ENCODE measurements at regions of chr10 and their contacts with region 1.

Region 1: DNA sequence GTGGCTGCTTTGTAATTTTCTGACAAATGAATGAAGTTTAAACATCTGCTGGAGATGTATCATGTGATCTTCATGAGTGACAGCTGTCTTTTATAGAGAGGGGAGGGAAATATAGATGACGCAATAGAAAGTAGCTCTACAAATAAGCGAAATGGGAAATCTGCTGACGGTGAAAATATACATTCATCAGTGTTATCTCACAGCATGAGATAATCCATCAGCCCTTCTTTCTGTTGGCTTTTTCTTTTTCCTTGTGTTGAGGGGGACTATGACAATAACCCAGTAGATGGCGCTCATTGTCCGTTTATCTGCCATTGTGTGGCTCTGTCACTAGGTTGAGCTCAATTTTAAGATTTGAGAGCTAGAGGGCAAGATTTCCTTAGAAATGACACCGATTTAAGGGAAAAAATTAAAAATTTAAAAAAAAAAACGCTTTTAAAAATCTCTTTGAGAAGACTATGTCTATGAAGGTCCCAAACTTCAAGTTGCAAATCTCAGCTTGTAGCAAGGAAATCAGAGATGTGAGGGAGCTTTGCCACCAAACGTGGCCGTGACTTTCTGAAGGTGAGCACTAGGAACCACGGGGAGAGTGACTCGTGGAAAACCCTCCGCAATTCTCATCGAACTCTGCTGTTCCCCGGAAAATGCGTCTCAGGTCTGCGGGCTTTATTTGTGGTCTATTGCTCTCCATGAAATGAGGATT is 114.6 kb upstream of the SFMBT2 start:
- DNase-seq: peak; percentile 78
- H3K4me3 Mint-ChIP-seq: no peak overlapping the region
- H3K27ac Mint-ChIP-seq: no peak overlapping the region
- H3K4me1 Mint-ChIP-seq: peaks cover 6% of the 10 kb centered on the region
- H3K27me3 Mint-ChIP-seq: peaks cover 26% of the 10 kb centered on the region
- CTCF ChIP-seq: peak; percentile 71

Region 2: DNA sequence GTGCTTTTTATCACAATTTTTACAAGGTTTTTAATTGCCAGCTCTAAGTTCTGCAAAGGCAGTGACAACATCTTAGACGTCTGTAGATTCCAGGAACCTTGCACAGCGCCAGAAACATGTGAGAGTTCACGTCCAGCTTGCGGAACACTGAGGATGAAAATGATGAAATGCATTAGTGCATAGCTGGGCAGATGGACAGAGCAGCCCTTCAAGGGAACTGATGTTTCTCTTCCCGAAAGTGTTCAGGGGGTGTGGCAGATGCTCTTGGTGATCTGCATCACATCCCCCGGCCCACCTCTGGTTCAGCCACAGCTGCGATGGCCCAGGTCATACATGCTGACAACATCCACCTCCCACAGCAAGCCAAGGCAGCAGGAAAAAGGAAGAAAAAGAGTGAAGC is 100.4 kb after region 1 on chr10:
- CTCF ChIA-PET with region 1: interaction called, 4 read pairs
- POLR2A ChIA-PET with region 1: no interaction called
- intact Hi-C with region 1: loop called (anchors 5 kb)
- DNase-seq: peak; percentile 17
- H3K4me3 Mint-ChIP-seq: no peak overlapping the region
- H3K27ac Mint-ChIP-seq: peak overlapping the region; percentile 32
- H3K4me1 Mint-ChIP-seq: peaks cover 18% of the 10 kb centered on the region
- H3K27me3 Mint-ChIP-seq: no peaks in the 10 kb centered on the region
- CTCF ChIP-seq: no peak

Region 3: GRCh38 chr10:7756360-7756992 is 231.0 kb after region 1 on chr10:
- CTCF ChIA-PET with region 1: interaction called, 4 read pairs
- POLR2A ChIA-PET with region 1: no interaction called
- intact Hi-C with region 1: loop called (anchors 2 kb)
- DNase-seq: peak; percentile 55
- H3K4me3 Mint-ChIP-seq: no peak overlapping the region
- H3K27ac Mint-ChIP-seq: no peak overlapping the region
- H3K4me1 Mint-ChIP-seq: no peaks in the 10 kb centered on the region
- H3K27me3 Mint-ChIP-seq: no peaks in the 10 kb centered on the region
- CTCF ChIP-seq: peak; percentile 45

Region 4: DNA sequence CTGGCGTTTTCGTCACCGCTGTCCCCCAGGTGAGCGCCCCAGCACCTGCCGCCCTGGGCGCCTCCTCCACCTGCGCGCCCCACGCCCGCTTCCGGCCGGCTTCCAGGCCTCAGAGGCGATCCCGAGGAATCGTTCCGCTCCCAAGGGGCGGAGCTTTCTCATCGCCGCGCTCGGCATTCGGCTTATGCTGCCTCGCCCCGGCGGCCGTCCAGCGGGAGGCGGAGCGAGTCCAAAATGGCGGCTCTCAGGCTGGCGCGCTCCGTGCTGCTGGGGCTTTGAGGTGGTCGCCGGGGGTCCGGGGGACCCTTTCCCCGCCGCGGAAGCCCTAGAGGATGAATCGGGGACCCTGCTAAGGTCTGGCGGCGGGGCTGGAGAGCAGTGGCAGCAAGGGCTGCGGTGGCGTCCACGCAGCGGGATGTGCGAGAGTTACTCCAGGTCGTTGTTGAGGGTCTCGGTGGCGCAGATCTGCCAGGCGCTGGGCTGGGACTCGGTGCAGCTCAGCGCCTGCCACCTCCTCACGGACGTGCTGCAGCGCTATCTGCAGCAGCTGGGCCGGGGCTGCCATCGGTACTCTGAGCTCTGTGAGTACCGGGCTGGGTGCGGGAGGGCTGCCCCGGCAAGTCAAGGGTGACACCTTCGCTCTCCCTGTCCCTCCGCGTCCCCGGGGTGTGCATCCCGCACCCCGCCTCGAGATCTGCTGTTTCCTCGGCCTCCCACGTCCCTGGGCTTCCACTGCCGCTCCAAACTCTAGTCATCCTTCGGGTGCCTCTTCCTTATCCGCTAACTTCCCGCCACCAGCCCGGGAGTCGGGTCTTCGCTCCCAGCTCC is 293.0 kb after region 1 on chr10 and contains the start of gene TAF3:
- CTCF ChIA-PET with region 1: interaction called, 15 read pairs
- POLR2A ChIA-PET with region 1: no interaction called
- intact Hi-C with region 1: loop called (anchors 1 kb)
- DNase-seq: peak; percentile 92
- H3K4me3 Mint-ChIP-seq: peak within 1 kb of the TSS; percentile 94
- H3K27ac Mint-ChIP-seq: peak within 1 kb of the TSS; percentile 57
- H3K4me1 Mint-ChIP-seq: peaks cover 24% of the 10 kb centered on the region
- H3K27me3 Mint-ChIP-seq: no peaks in the 10 kb centered on the region
- CTCF ChIP-seq: no peak
- total RNA-seq, gene TAF3: 9.3 and 9.9 TPM in 2 replicates

Region 5: DNA sequence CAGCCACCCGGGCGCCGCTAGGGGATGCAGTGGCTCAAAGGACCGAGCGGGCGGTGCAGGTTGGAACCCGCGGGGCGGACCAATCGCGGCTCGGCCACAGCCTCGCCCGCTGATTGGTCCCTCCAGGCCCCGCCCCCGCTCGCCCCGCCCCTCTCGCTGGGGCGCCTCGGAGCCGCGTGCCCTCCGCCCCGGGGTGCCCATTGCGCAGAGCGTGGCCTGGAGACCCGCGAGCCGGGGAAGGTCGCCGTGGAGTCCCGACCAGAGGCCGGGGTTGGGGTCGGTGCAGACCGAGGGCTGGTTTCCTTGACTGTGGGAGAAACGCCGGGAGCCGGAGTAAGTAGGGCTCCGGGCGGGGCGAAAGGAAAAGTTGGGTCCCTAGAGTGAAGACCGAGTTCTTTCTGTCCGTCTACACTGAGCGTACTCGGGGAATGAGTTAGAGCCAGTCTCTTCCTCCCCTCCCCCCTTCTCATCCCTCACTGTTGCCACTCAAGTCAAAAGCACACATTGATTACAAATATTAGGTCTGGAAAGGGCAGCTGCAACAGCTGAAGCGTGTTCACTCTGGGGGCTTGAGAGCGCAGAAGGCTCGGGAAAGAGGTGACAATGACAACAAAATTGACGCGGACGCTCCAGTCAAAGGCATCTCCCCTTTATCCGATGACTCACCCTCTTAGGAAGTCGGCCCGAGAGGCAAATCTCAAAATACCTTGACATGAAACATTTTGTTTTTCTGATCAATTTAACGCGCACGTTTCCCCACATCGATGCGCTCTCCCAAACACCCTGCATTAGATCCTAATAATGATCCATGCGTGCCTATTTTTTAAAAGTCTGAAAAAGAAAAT is 528.2 kb after region 1 on chr10:
- CTCF ChIA-PET with region 1: no interaction called
- POLR2A ChIA-PET with region 1: no interaction called
- intact Hi-C with region 1: loop called (anchors 5 kb)
- DNase-seq: peak; percentile 88
- H3K4me3 Mint-ChIP-seq: peak overlapping the region; percentile 93
- H3K27ac Mint-ChIP-seq: no peak overlapping the region
- H3K4me1 Mint-ChIP-seq: peaks cover 8% of the 10 kb centered on the region
- H3K27me3 Mint-ChIP-seq: peaks cover 7% of the 10 kb centered on the region
- CTCF ChIP-seq: peak; percentile 87

Region 6: DNA sequence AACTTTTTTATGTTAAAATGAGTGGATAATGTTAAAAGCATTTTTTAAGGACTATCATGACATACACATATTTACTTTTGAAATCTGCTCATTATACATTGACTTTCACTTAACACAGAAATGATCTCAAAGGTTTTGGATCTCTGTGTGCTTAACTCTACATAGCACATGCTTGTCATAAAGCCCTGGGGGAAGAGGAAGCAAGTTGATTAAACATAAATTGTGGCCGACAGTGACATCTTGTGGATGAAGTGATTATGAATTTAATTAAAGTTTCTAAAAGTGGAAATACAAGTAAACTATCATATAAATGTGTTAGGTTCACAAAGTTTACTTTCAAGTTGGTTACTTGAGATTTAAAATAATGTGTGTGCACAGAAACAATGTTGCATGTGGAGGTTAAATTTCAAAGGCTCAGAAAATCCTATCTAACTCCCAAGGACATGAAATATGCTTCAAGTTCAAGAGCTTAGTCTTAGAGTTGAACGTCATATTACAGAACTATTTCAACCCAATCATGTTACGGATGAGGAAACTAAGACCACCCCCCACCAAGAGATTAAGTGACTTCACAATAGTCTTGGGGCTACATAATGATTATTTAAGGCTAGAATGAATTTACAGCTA is 1776.8 kb after region 1 on chr10:
- CTCF ChIA-PET with region 1: interaction called, 11 read pairs
- POLR2A ChIA-PET with region 1: interaction called, 3 read pairs
- intact Hi-C with region 1: loop called (anchors 1 kb)
- DNase-seq: peak; percentile 74
- H3K4me3 Mint-ChIP-seq: no peak overlapping the region
- H3K27ac Mint-ChIP-seq: no peak overlapping the region
- H3K4me1 Mint-ChIP-seq: no peaks in the 10 kb centered on the region
- H3K27me3 Mint-ChIP-seq: no peaks in the 10 kb centered on the region
- CTCF ChIP-seq: peak; percentile 38

Measured in MCF 10A (cell line).